Common myeloid progenitor, CD34-positive (primary cell): ENCODE measurements at regions of chr14 and their contacts with region 1.

Region 1: GRCh38 chr14:88168498-88169165 is 154.4 kb downstream of the KCNK10 start:
- DNase-seq: peak; percentile 30 to 65 (median 52)
- H3K4me3 ChIP-seq: no peak overlapping the region
- H3K27ac ChIP-seq: no peak overlapping the region
- H3K4me1 ChIP-seq: no peaks in the 10 kb centered on the region
- H3K27me3 ChIP-seq: peaks cover 0 to 3% (median 0%) of the 10 kb centered on the region in 5 experiments

Region 2: GRCh38 chr14:88013750-88014349 is 154.8 kb before region 1 on chr14:
- CTCF ChIA-PET with region 1: interaction called, 11 read pairs
- POLR2A ChIA-PET with region 1: no interaction called
- DNase-seq: peak; percentile 70 to 85 (median 81)
- H3K4me3 ChIP-seq: peak overlapping the region in 1 of 7 experiments; percentile 17
- H3K27ac ChIP-seq: no peak overlapping the region
- H3K4me1 ChIP-seq: peaks cover 0 to 3% (median 0%) of the 10 kb centered on the region in 4 experiments
- H3K27me3 ChIP-seq: no peaks in the 10 kb centered on the region

Region 3: DNA sequence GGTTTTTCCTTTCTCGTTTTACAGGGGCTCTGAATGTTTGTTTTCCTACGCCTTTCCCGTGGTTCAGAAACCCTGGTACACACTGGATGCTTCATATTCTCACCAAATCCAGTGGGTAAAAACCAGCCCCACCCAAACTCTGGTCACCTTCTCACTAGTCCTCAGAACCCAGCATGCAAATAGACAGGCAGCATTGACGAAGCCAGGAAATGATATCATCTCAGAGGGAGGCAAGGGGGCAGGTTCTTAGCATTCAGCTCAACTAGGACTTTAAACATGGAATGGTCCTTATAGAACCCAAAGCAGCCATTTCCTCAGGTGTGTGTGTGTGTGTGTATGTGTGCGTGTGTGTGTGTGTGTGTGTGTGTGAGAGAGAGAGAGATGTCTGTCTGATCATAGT is 12.4 kb after region 1 on chr14:
- CTCF ChIA-PET with region 1: interaction called, 22 read pairs
- POLR2A ChIA-PET with region 1: no interaction called
- DNase-seq: no peak
- H3K4me3 ChIP-seq: no peak overlapping the region
- H3K27ac ChIP-seq: no peak overlapping the region
- H3K4me1 ChIP-seq: no peaks in the 10 kb centered on the region
- H3K27me3 ChIP-seq: peaks cover 0 to 2% (median 0%) of the 10 kb centered on the region in 5 experiments